ENCODE measurements at regions of chr3 and their contacts with region 1.

Region 1: GRCh38 chr3:57692259-57693147 is at the start of gene DENND6A:
- DNase-seq: peak; percentile 98
- ATAC-seq: peak; percentile 88
- H3K4me3 Mint-ChIP-seq: peak within 1 kb of the TSS; percentile 87
- H3K27ac Mint-ChIP-seq: peak within 1 kb of the TSS; percentile 85
- H3K4me1 Mint-ChIP-seq: peaks cover 31% of the 10 kb centered on the region
- H3K27me3 Mint-ChIP-seq: no peaks in the 10 kb centered on the region
- total RNA-seq, gene DENND6A: 15.0 to 17.1 TPM

Region 2: GRCh38 chr3:57572096-57572495 is 120.4 kb before region 1 on chr3:
- CTCF ChIA-PET with region 1: no interaction called
- POLR2A ChIA-PET with region 1: no interaction called
- intact Hi-C with region 1: no loop called
- DNase-seq: no peak
- ATAC-seq: no peak
- H3K4me3 Mint-ChIP-seq: no peak overlapping the region
- H3K27ac Mint-ChIP-seq: peak overlapping the region; percentile 1
- H3K4me1 Mint-ChIP-seq: peaks cover 13% of the 10 kb centered on the region
- H3K27me3 Mint-ChIP-seq: no peaks in the 10 kb centered on the region

Region 3: GRCh38 chr3:57670543-57670942 is 22.0 kb before region 1 on chr3:
- CTCF ChIA-PET with region 1: no interaction called
- POLR2A ChIA-PET with region 1: no interaction called
- intact Hi-C with region 1: loop called in 1 of 2 experiments (anchors 2 kb)
- DNase-seq: no peak
- ATAC-seq: no peak
- H3K4me3 Mint-ChIP-seq: no peak overlapping the region
- H3K27ac Mint-ChIP-seq: no peak overlapping the region
- H3K4me1 Mint-ChIP-seq: peaks cover 17% of the 10 kb centered on the region
- H3K27me3 Mint-ChIP-seq: no peaks in the 10 kb centered on the region

Region 4: GRCh38 chr3:58082047-58082446 is 389.5 kb after region 1 on chr3:
- CTCF ChIA-PET with region 1: no interaction called
- POLR2A ChIA-PET with region 1: no interaction called
- intact Hi-C with region 1: no loop called
- DNase-seq: peak; percentile 44
- ATAC-seq: peak; percentile 66
- H3K4me3 Mint-ChIP-seq: peak overlapping the region; percentile 25
- H3K27ac Mint-ChIP-seq: peak overlapping the region; percentile 81
- H3K4me1 Mint-ChIP-seq: peaks cover 56% of the 10 kb centered on the region
- H3K27me3 Mint-ChIP-seq: no peaks in the 10 kb centered on the region